AG04450 (cell line): ENCODE measurements at regions of chr13 and their contacts with region 1.

Region 1: GRCh38 chr13:36346222-36347083 is at the start of gene SPART:
- DNase-seq: peak; percentile 78
- H3K4me3 ChIP-seq: peak within 1 kb of the TSS; percentile 83
- H3K27ac ChIP-seq: peak within 1 kb of the TSS; percentile 100
- H3K27me3 ChIP-seq: no peaks in the 10 kb centered on the region
- CTCF ChIP-seq: peak; percentile 98
- polyA plus RNA-seq, gene SPART: 69.7 and 94.6 TPM in 2 replicates

Region 2: GRCh38 chr13:36331280-36331679 is 15.2 kb before region 1 on chr13:
- CTCF ChIA-PET with region 1: interaction called, 13 read pairs
- POLR2A ChIA-PET with region 1: no interaction called
- DNase-seq: no peak
- H3K4me3 ChIP-seq: no peak overlapping the region
- H3K27ac ChIP-seq: no peak overlapping the region
- H3K27me3 ChIP-seq: no peaks in the 10 kb centered on the region
- CTCF ChIP-seq: no peak

Region 3: GRCh38 chr13:36362251-36362650 is 15.8 kb after region 1 on chr13:
- CTCF ChIA-PET with region 1: interaction called, 53 read pairs
- POLR2A ChIA-PET with region 1: interaction called, 3 read pairs
- DNase-seq: peak; percentile 38
- H3K4me3 ChIP-seq: no peak overlapping the region
- H3K27ac ChIP-seq: no peak overlapping the region
- H3K27me3 ChIP-seq: no peaks in the 10 kb centered on the region
- CTCF ChIP-seq: no peak

Region 4: DNA sequence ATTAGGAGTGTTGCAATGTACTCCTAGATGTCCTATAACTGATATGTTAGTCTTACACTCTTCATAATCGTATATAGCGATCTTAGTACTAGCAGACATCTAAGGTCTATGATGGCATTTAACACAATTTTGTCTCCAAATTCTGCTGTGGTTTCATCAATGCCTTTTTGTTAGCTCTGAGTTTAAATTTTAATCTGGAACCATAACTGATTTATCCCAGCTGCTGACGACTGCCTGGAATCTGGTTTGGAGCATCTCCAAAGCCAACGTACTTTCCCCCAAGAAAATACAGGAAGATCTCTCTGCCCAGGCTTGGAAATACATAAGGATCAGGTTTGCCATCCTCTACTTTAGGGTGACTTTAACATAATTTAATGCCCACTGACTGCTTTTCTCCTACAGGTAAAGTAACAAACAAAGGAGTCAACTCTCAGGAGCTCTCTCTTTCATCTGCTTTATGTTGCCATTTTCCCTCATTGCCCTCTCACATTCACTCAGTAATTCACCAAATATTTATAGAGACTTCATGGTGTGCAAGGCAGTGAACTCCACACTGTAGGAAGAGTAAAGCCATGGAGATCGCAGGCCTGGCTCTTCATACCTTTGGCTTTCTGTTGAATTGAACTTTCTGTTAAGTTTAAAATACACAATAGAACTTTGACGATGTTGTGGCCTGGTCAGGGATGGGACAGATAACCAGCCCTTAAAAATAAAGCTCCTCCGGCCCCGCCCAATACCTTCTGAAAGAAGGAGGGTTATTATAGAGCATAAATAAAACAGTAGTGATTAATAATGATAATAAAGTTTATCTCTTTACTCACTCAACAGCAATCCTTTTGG is 23.0 kb after region 1 on chr13:
- CTCF ChIA-PET with region 1: interaction called, 30 read pairs
- POLR2A ChIA-PET with region 1: interaction called, 3 read pairs
- DNase-seq: no peak
- H3K4me3 ChIP-seq: no peak overlapping the region
- H3K27ac ChIP-seq: no peak overlapping the region
- H3K27me3 ChIP-seq: no peaks in the 10 kb centered on the region
- CTCF ChIP-seq: no peak

Region 5: GRCh38 chr13:36395280-36395679 is 48.8 kb after region 1 on chr13:
- CTCF ChIA-PET with region 1: interaction called, 48 read pairs
- POLR2A ChIA-PET with region 1: interaction called, 4 read pairs
- DNase-seq: peak; percentile 27
- H3K4me3 ChIP-seq: no peak overlapping the region
- H3K27ac ChIP-seq: no peak overlapping the region
- H3K27me3 ChIP-seq: no peaks in the 10 kb centered on the region
- CTCF ChIP-seq: peak; percentile 69